ENCODE measurements at regions of chr12 and their contacts with region 1.

Region 1: GRCh38 chr12:27123642-27124041 is 41.3 kb upstream of the C12orf71 start:
- DNase-seq: no peak
- H3K4me3 Mint-ChIP-seq: no peak overlapping the region
- H3K27ac Mint-ChIP-seq: no peak overlapping the region
- H3K4me1 Mint-ChIP-seq: no peaks in the 10 kb centered on the region
- H3K27me3 Mint-ChIP-seq: no peaks in the 10 kb centered on the region

Region 2: DNA sequence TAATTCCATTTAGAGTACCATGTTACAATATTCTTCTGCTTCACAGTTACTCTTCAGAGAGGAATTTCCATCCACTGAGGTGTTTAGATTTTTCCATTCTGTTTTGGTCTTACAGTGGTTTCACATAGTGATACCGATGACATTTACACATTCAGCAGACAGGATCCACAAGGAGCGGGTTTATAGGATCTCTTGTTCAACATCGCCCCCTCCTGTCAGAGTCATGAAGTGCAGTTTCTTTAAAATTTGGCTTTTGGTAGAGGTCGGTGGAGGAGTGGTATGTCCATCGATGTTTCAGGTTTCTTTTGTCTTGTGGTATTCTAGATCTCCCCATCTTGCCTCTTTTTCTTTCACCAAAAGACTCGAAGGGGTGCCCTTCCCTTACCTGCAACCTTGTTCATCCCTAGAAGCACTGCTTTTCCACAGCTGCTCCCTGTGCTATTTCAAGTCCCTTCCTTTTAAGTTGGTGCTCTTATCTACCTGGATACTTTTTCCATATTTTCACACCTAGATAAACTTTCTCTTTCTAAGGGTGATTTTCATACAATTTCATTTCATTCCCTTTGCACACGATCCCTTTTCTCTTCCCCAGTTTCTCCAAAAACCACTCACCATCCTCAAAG is 472.0 kb before region 1 on chr12:
- CTCF ChIA-PET with region 1: no interaction called
- POLR2A ChIA-PET with region 1: no interaction called
- intact Hi-C with region 1: no loop called
- DNase-seq: peak; percentile 50
- H3K4me3 Mint-ChIP-seq: no peak overlapping the region
- H3K27ac Mint-ChIP-seq: no peak overlapping the region
- H3K4me1 Mint-ChIP-seq: no peaks in the 10 kb centered on the region
- H3K27me3 Mint-ChIP-seq: no peaks in the 10 kb centered on the region

Region 3: DNA sequence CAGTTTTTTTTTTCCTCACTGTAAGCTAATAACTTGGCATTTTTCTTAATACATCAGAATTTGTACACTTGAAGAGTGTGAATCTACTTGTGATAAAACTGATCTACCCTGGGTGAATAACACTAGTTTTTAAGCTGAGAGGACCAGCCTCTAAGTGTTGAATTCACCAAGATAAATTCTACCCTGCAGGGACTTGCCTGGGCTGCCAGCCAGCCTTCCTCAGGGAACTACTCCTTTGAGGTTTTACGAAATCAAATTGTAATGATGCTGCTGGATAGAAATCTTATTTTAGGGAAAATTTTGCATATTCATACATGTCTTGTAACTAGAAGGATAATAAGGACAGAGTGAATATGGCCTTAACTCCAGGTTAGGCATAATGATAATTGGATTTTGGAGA is 99.4 kb before region 1 on chr12:
- CTCF ChIA-PET with region 1: no interaction called
- POLR2A ChIA-PET with region 1: no interaction called
- intact Hi-C with region 1: loop called (anchors 5 kb)
- DNase-seq: no peak
- H3K4me3 Mint-ChIP-seq: no peak overlapping the region
- H3K27ac Mint-ChIP-seq: no peak overlapping the region
- H3K4me1 Mint-ChIP-seq: peaks cover 40% of the 10 kb centered on the region
- H3K27me3 Mint-ChIP-seq: no peaks in the 10 kb centered on the region

Region 4: DNA sequence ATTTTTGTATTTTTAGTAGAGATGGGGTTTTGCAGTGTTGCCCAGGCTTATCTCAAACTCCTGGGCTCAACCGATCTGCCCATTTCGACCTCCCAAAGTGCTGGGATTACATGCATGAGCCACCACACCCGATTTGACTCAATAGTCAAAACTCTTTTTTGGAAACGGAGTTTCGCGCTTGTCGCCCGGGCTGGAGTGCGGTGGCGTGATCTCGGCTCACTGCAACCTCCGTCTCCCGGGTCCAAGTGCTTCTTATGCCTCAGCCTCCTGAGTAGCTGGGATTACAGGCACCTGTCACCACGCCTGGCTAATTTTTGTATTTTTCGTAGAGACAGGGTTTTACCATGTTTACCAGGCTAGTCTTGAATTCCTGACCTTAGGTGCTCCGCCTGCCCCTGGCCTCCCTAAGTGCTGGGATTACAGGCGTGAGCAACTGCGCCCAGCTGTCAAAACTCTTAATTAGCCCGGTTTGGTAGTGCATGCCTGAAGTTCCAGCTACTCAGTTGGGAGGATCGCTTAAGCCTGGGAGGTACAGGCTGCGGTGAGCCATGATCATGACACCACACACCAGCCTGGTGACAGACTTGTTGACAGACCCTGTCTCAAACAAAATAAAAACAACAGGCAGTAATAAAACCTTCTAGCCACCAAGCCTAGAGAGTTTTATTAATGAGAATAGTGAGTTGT is 88.9 kb before region 1 on chr12:
- CTCF ChIA-PET with region 1: no interaction called
- POLR2A ChIA-PET with region 1: no interaction called
- intact Hi-C with region 1: loop called (anchors 1 kb)
- DNase-seq: no peak
- H3K4me3 Mint-ChIP-seq: no peak overlapping the region
- H3K27ac Mint-ChIP-seq: no peak overlapping the region
- H3K4me1 Mint-ChIP-seq: no peaks in the 10 kb centered on the region
- H3K27me3 Mint-ChIP-seq: no peaks in the 10 kb centered on the region

Region 5: GRCh38 chr12:27243804-27244683 is 120.4 kb after region 1 on chr12 and contains the start of gene STK38L:
- CTCF ChIA-PET with region 1: no interaction called
- POLR2A ChIA-PET with region 1: no interaction called
- intact Hi-C with region 1: no loop called
- DNase-seq: peak; percentile 98
- H3K4me3 Mint-ChIP-seq: peak within 1 kb of the TSS; percentile 100
- H3K27ac Mint-ChIP-seq: peak within 1 kb of the TSS; percentile 91
- H3K4me1 Mint-ChIP-seq: peaks cover 45% of the 10 kb centered on the region
- H3K27me3 Mint-ChIP-seq: no peaks in the 10 kb centered on the region
- total RNA-seq, gene STK38L: 25.1 to 25.2 TPM